ENCODE measurements at regions of chr15 and their contacts with region 1.

Region 1: GRCh38 chr15:95919460-95919859 is 411.0 kb upstream of the NR2F2 start:
- DNase-seq: no peak

Region 2: DNA sequence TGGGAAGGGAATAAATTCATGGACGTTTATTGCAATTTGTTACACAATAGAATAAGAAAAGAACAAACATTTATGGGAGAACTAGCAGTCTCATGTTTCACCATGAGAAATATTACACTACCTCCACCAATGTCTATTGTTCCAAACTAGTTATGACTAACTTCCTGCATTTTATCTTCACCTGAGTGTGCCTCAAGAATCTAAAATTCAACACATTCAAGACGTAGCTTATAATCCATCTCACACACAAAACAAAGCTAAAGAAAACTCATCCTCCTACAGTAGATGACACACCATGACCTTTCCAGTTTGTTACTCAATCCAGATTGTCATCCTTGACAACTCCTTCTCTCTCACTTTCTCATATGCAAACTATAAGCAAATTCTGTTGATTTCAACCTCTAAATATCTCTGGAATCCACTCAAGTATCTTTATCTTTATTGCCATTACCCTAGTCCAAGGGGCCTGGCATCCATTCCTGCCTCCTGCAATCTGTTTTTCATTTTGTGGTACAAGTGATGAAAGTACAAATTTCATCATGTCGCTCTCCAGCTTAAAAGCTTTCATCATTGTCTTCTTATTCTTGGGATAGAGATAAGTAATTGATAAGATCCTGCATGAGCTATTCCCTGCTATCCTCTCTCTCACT is 640.9 kb after region 1 on chr15:
- intact Hi-C with region 1: loop called in 1 of 2 experiments (anchors 5 kb)
- DNase-seq: no peak